Activated CD4-positive, alpha-beta T cell treated with anti-CD3 and anti-CD28 coated beads for 36 hours (primary cell): ENCODE measurements at regions of chr6 and their contacts with region 1.

Region 1: DNA sequence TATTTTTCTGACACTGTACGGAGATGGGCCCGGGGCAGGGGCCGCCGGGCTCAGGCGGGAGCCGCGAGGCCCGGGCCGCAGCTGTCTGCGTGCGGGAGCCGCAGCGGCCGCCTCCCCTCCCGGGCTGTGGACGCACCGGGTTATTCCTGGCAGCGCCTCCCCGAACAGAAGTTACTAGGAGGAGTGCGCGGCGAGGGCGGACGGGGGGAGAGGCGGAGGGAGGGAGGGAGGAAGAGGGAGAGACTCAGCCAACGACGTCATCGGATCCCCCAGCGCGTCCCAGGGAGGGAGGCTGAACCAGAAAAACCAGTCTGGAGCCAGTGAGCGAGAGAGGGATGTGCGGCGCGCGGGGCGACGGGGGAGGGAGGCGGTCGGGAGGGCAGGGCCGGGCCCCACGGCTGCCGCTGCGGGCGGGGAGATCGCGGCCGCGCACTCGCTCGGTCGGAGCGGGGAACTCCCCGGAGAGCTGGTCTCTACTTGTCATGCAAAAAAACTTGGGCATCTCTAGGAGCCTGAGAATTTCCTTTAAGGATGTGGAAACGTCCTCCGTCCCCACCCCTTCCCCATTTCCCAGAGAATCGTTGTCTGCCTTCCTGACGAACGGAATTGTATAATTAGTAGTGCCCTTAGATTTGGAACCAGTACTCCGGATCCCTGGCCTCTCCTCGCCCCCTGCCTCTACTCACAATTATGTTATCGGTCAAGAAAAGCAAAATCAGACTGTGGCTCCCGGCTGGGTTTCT is 1.4 kb upstream of the HIVEP2 start:
- DNase-seq: peak; percentile 96
- ATAC-seq: peak; percentile 47
- H3K4me3 Mint-ChIP-seq: peak overlapping the region; percentile 96
- H3K27ac Mint-ChIP-seq: peak overlapping the region; percentile 96
- H3K4me1 Mint-ChIP-seq: peaks cover 27% of the 10 kb centered on the region
- H3K27me3 Mint-ChIP-seq: no peaks in the 10 kb centered on the region

Region 2: DNA sequence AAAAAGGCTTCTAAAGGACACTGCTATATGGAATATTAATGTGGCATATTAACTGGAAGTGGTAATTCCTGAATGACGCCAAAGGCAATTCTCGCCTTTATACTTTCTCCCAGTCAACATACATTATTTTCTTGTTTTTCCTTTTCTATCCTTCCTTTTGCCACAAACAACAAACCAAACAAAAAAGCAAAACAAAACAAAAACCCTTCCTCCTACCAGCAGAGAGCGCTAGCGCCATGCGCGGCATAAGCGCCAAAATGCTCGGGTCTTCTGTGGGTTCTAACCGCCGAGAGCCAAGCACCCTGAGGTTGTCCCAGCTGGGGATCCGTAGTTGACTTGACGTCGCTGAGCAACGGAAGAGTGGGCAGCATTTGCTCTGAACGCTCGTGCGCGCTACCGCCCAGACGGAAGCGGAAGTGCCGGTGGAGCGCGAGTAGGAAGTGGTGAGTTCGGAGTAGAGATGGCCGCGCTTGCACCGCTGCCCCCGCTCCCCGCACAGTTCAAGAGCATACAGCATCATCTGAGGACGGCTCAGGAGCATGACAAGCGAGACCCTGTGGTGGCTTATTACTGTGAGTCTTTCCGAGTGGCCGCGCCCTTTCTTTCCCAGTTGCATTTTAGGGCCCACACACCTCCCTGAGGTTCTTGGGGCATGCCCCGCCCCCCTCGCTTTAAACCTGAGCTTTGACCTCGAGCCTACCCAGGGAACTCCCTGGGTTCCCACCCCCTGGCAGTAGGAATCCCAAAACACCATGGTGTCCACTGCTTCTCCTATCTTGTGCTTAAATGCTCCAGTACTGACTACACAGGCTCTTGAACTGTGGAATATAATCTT is 799.3 kb before region 1 on chr6 and contains the starts of genes NMBR and VTA1:
- CTCF ChIA-PET with region 1: no interaction called
- POLR2A ChIA-PET with region 1: no interaction called
- intact Hi-C with region 1: loop called (anchors 1 to 2 kb)
- DNase-seq: peak; percentile 98
- ATAC-seq: peak; percentile 98
- H3K4me3 Mint-ChIP-seq: peak within 1 kb of the TSS; percentile 97
- H3K27ac Mint-ChIP-seq: peak within 1 kb of the TSS; percentile 95
- H3K4me1 Mint-ChIP-seq: peaks cover 56% of the 10 kb centered on the region
- H3K27me3 Mint-ChIP-seq: no peaks in the 10 kb centered on the region
- total RNA-seq, gene NMBR: not detected
- total RNA-seq, gene VTA1: 55.6 to 73.9 TPM

Region 3: DNA sequence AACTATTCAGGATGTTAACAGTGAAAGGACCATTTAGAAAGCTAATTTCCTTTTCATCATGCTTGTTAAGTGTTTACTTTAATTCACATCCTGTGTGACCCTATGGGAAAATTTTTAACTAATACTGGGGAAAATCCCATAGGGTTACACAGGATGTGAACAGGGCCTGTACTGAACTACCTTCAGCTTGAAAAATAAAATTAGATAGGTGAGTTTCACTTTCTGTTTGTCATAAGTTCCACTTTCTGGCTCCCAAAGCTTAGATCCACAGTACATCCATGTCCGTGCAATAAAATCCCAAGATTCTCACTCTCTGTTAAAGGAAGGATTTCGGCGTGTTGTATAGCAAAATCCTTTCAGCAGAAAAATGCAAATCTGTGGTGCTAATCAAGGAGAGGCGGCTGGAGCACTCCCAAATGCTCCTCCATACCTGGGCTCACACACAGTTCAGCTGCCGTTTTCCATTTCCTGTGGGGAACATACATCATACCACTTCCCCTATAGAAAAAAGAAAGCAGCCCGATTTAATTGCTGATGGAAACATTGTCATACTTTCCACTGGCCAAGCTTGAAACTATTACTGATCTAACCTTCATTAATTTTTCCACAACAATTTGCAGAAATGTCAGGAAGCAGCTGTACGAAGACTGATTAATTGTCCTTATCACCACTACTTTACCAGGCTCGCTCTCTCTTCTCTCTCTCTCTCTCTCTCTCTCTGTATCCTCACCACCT is 126.6 kb before region 1 on chr6:
- CTCF ChIA-PET with region 1: interaction called, 5 read pairs
- POLR2A ChIA-PET with region 1: interaction called, 3 read pairs
- intact Hi-C with region 1: loop called (anchors 1 to 2 kb)
- DNase-seq: peak; percentile 70
- ATAC-seq: peak; percentile 62
- H3K4me3 Mint-ChIP-seq: peak overlapping the region; percentile 78
- H3K27ac Mint-ChIP-seq: peak overlapping the region; percentile 96
- H3K4me1 Mint-ChIP-seq: peaks cover 83% of the 10 kb centered on the region
- H3K27me3 Mint-ChIP-seq: no peaks in the 10 kb centered on the region

Region 4: DNA sequence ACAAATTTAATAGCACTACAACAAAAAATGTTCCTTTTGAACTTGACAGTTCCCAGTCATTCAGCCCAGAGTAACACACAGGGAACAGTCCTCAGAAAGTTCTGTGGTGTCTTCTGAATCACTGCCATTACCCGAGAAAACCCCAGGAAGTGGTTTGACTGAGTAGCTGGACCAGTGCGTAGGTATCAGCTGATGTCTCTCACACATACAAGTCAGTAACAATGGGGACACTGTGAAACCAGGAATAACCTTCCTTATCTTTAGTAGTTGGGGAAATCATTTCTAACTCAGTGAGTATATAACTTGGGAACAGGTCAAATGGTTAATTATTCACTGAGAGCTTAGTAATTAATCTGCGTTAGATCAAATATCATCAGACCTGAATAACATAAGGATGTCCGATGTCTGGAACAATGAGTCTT is 74.4 kb before region 1 on chr6:
- CTCF ChIA-PET with region 1: interaction called, 3 read pairs
- POLR2A ChIA-PET with region 1: no interaction called
- intact Hi-C with region 1: loop called in 1 of 2 experiments (anchors 1 kb)
- DNase-seq: peak; percentile 72
- ATAC-seq: peak; percentile 93
- H3K4me3 Mint-ChIP-seq: peak overlapping the region; percentile 42
- H3K27ac Mint-ChIP-seq: peak overlapping the region; percentile 91
- H3K4me1 Mint-ChIP-seq: peaks cover 86% of the 10 kb centered on the region
- H3K27me3 Mint-ChIP-seq: no peaks in the 10 kb centered on the region

Region 5: GRCh38 chr6:142913511-142914047 is 32.8 kb before region 1 on chr6:
- CTCF ChIA-PET with region 1: interaction called, 6 read pairs
- POLR2A ChIA-PET with region 1: interaction called, 3 read pairs
- intact Hi-C with region 1: loop called (anchors 1 kb)
- DNase-seq: peak; percentile 82
- ATAC-seq: peak; percentile 88
- H3K4me3 Mint-ChIP-seq: peak overlapping the region; percentile 65
- H3K27ac Mint-ChIP-seq: peak overlapping the region; percentile 97
- H3K4me1 Mint-ChIP-seq: peaks cover 86% of the 10 kb centered on the region
- H3K27me3 Mint-ChIP-seq: no peaks in the 10 kb centered on the region

Region 6: GRCh38 chr6:143060354-143060805 is 114.0 kb after region 1 on chr6:
- CTCF ChIA-PET with region 1: no interaction called
- POLR2A ChIA-PET with region 1: interaction called, 5 read pairs
- intact Hi-C with region 1: loop called (anchors 1 to 2 kb)
- DNase-seq: peak; percentile 85
- ATAC-seq: peak; percentile 60
- H3K4me3 Mint-ChIP-seq: peak overlapping the region; percentile 77
- H3K27ac Mint-ChIP-seq: peak overlapping the region; percentile 88
- H3K4me1 Mint-ChIP-seq: peaks cover 30% of the 10 kb centered on the region
- H3K27me3 Mint-ChIP-seq: no peaks in the 10 kb centered on the region

Region 7: GRCh38 chr6:143087856-143088255 is 141.5 kb after region 1 on chr6:
- CTCF ChIA-PET with region 1: no interaction called
- POLR2A ChIA-PET with region 1: no interaction called
- intact Hi-C with region 1: no loop called
- DNase-seq: no peak
- ATAC-seq: no peak
- H3K4me3 Mint-ChIP-seq: no peak overlapping the region
- H3K27ac Mint-ChIP-seq: no peak overlapping the region
- H3K4me1 Mint-ChIP-seq: peaks cover 6% of the 10 kb centered on the region
- H3K27me3 Mint-ChIP-seq: no peaks in the 10 kb centered on the region

Region 8: GRCh38 chr6:143123081-143123480 is 176.7 kb after region 1 on chr6:
- CTCF ChIA-PET with region 1: no interaction called
- POLR2A ChIA-PET with region 1: no interaction called
- intact Hi-C with region 1: no loop called
- DNase-seq: no peak
- ATAC-seq: no peak
- H3K4me3 Mint-ChIP-seq: no peak overlapping the region
- H3K27ac Mint-ChIP-seq: no peak overlapping the region
- H3K4me1 Mint-ChIP-seq: peaks cover 12% of the 10 kb centered on the region
- H3K27me3 Mint-ChIP-seq: no peaks in the 10 kb centered on the region

Region 9: GRCh38 chr6:143615785-143616184 is 669.4 kb after region 1 on chr6:
- CTCF ChIA-PET with region 1: no interaction called
- POLR2A ChIA-PET with region 1: no interaction called
- intact Hi-C with region 1: no loop called
- DNase-seq: no peak
- ATAC-seq: peak; percentile 69
- H3K4me3 Mint-ChIP-seq: no peak overlapping the region
- H3K27ac Mint-ChIP-seq: no peak overlapping the region
- H3K4me1 Mint-ChIP-seq: peaks cover 33% of the 10 kb centered on the region
- H3K27me3 Mint-ChIP-seq: no peaks in the 10 kb centered on the region

Region 10: GRCh38 chr6:144149891-144150709 is 1203.7 kb after region 1 on chr6 and contains the start of gene STX11:
- CTCF ChIA-PET with region 1: no interaction called
- POLR2A ChIA-PET with region 1: no interaction called
- intact Hi-C with region 1: loop called in 1 of 2 experiments (anchors 10 kb)
- DNase-seq: peak; percentile 91
- ATAC-seq: peak; percentile 80
- H3K4me3 Mint-ChIP-seq: peak within 1 kb of the TSS; percentile 84
- H3K27ac Mint-ChIP-seq: peak within 1 kb of the TSS; percentile 95
- H3K4me1 Mint-ChIP-seq: peaks cover 41% of the 10 kb centered on the region
- H3K27me3 Mint-ChIP-seq: peaks cover 5% of the 10 kb centered on the region
- total RNA-seq, gene STX11: 19.6 to 20.9 TPM